Natural killer cell (primary cell): ENCODE measurements at regions of chr14 and their contacts with region 1.

Region 1: DNA sequence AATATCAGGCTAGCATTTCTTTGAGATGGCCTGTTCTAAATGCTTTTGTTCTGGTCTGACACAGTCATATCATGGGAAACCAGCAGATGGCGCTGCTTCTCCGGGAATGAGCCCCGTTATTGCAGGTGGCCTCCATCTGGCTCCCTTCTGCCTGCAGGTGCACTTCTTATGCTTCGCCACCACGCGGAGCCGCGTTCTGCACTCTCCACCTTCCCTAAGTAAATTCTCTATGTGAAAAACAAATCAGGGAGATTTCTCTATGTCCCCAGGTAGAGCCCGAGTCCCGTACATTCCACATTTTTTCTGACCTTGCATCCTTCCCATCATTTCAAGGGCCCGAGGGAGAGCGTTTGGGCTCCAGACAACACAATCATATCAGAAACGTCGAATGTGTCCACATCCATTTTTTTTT is 26.2 kb downstream of the GLRX5 start:
- DNase-seq: peak; percentile 63 to 91
- ATAC-seq: peak; percentile 61 to 87 (median 82)
- H3K4me3 ChIP-seq: no peak overlapping the region
- H3K4me3 Mint-ChIP-seq: no peak overlapping the region
- H3K27ac ChIP-seq: no peak overlapping the region
- H3K27ac Mint-ChIP-seq: no peak overlapping the region
- H3K4me1 ChIP-seq: peaks cover 4% of the 10 kb centered on the region
- H3K4me1 Mint-ChIP-seq: peaks cover 0 to 11% of the 10 kb centered on the region in 2 donors
- H3K27me3 ChIP-seq: no peaks in the 10 kb centered on the region
- H3K27me3 Mint-ChIP-seq: peaks cover 0 to 8% of the 10 kb centered on the region in 2 donors
- CTCF ChIP-seq: peak; percentile 86

Region 2: GRCh38 chr14:94654071-94654861 is 906.7 kb before region 1 on chr14:
- intact Hi-C with region 1: no loop called
- DNase-seq: no peak
- ATAC-seq: no peak
- H3K4me3 ChIP-seq: no peak overlapping the region
- H3K4me3 Mint-ChIP-seq: no peak overlapping the region
- H3K27ac ChIP-seq: no peak overlapping the region
- H3K27ac Mint-ChIP-seq: no peak overlapping the region
- H3K4me1 ChIP-seq: no peaks in the 10 kb centered on the region
- H3K4me1 Mint-ChIP-seq: no peaks in the 10 kb centered on the region
- H3K27me3 ChIP-seq: no peaks in the 10 kb centered on the region
- H3K27me3 Mint-ChIP-seq: peaks cover 0 to 3% of the 10 kb centered on the region in 2 donors
- CTCF ChIP-seq: no peak

Region 3: GRCh38 chr14:95534299-95535225 is 26.4 kb before region 1 on chr14 and contains the start of gene GLRX5:
- intact Hi-C with region 1: no loop called
- DNase-seq: peak; percentile 95 to 99
- ATAC-seq: peak; percentile 85 to 94 (median 86)
- H3K4me3 ChIP-seq: peak within 1 kb of the TSS; percentile 58
- H3K4me3 Mint-ChIP-seq: peak within 1 kb of the TSS; percentile 97
- H3K27ac ChIP-seq: peak within 1 kb of the TSS; percentile 89
- H3K27ac Mint-ChIP-seq: peak within 1 kb of the TSS; percentile 95 to 96
- H3K4me1 ChIP-seq: peaks cover 20% of the 10 kb centered on the region
- H3K4me1 Mint-ChIP-seq: peaks cover 63 to 69% of the 10 kb centered on the region in 2 donors
- H3K27me3 ChIP-seq: no peaks in the 10 kb centered on the region
- H3K27me3 Mint-ChIP-seq: no peaks in the 10 kb centered on the region
- CTCF ChIP-seq: no peak
- total RNA-seq, gene GLRX5: 16.7 to 26.0 (median 23.4) TPM

Region 4: GRCh38 chr14:95683793-95684192 is 122.8 kb after region 1 on chr14:
- intact Hi-C with region 1: loop called (anchors 1 kb)
- DNase-seq: peak in 1 of 2 donors; percentile 58
- ATAC-seq: peak in 1 of 3 donors; percentile 50
- H3K4me3 ChIP-seq: no peak overlapping the region
- H3K4me3 Mint-ChIP-seq: no peak overlapping the region
- H3K27ac ChIP-seq: no peak overlapping the region
- H3K27ac Mint-ChIP-seq: no peak overlapping the region
- H3K4me1 ChIP-seq: no peaks in the 10 kb centered on the region
- H3K4me1 Mint-ChIP-seq: no peaks in the 10 kb centered on the region
- H3K27me3 ChIP-seq: no peaks in the 10 kb centered on the region
- H3K27me3 Mint-ChIP-seq: no peaks in the 10 kb centered on the region
- CTCF ChIP-seq: peak; percentile 40

Region 5: GRCh38 chr14:95774265-95775160 is 213.5 kb after region 1 on chr14:
- intact Hi-C with region 1: loop called (anchors 1 kb)
- DNase-seq: peak in 1 of 2 donors; percentile 71
- ATAC-seq: peak; percentile 40 to 64 (median 46)
- H3K4me3 ChIP-seq: no peak overlapping the region
- H3K4me3 Mint-ChIP-seq: no peak overlapping the region
- H3K27ac ChIP-seq: no peak overlapping the region
- H3K27ac Mint-ChIP-seq: no peak overlapping the region
- H3K4me1 ChIP-seq: no peaks in the 10 kb centered on the region
- H3K4me1 Mint-ChIP-seq: peaks cover 0 to 5% of the 10 kb centered on the region in 2 donors
- H3K27me3 ChIP-seq: no peaks in the 10 kb centered on the region
- H3K27me3 Mint-ChIP-seq: peaks cover 7 to 17% of the 10 kb centered on the region in 2 donors
- CTCF ChIP-seq: peak; percentile 88

Region 6: GRCh38 chr14:95993768-95994592 is 433.0 kb after region 1 on chr14:
- intact Hi-C with region 1: loop called (anchors 2 kb)
- DNase-seq: peak in 1 of 2 donors; percentile 65
- ATAC-seq: peak in 1 of 3 donors; percentile 56
- H3K4me3 ChIP-seq: no peak overlapping the region
- H3K4me3 Mint-ChIP-seq: no peak overlapping the region
- H3K27ac ChIP-seq: no peak overlapping the region
- H3K27ac Mint-ChIP-seq: no peak overlapping the region
- H3K4me1 ChIP-seq: no peaks in the 10 kb centered on the region
- H3K4me1 Mint-ChIP-seq: no peaks in the 10 kb centered on the region
- H3K27me3 ChIP-seq: no peaks in the 10 kb centered on the region
- H3K27me3 Mint-ChIP-seq: peaks cover 17 to 55% of the 10 kb centered on the region in 2 donors
- CTCF ChIP-seq: peak; percentile 76